Activated naive CD4-positive, alpha-beta T cell treated with anti-CD3 and anti-CD28 coated beads for 36 hours (primary cell): ENCODE measurements at regions of chr12 and their contacts with region 1.

Region 1: DNA sequence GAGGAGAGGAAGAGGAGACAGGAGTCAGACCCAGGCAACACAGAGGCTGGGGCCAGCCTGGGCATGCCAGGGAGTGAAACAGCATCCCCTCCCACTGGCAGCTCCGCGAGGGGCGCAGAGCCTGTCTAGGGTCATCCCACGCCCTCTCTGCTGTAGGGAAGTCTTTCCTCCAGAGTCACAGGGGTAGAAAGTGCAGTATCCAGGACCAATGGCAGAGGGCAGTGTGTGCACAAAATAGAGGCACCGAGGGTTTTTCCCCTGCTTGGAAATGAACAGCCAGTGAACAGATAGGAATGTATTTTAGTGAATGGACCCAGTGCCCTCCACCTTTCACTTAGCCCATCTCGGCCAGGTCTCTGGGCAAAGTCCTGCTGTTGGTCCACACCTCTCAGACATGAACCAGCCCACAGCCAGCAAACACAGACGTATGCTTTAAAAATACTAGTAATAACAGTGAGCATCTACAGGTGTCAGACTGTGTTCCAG is 9.4 kb upstream of the KRT74 start:
- DNase-seq: peak; percentile 84
- H3K4me3 Mint-ChIP-seq: no peak overlapping the region
- H3K27ac Mint-ChIP-seq: no peak overlapping the region
- H3K4me1 Mint-ChIP-seq: peaks cover 49% of the 10 kb centered on the region
- H3K27me3 Mint-ChIP-seq: no peaks in the 10 kb centered on the region

Region 2: DNA sequence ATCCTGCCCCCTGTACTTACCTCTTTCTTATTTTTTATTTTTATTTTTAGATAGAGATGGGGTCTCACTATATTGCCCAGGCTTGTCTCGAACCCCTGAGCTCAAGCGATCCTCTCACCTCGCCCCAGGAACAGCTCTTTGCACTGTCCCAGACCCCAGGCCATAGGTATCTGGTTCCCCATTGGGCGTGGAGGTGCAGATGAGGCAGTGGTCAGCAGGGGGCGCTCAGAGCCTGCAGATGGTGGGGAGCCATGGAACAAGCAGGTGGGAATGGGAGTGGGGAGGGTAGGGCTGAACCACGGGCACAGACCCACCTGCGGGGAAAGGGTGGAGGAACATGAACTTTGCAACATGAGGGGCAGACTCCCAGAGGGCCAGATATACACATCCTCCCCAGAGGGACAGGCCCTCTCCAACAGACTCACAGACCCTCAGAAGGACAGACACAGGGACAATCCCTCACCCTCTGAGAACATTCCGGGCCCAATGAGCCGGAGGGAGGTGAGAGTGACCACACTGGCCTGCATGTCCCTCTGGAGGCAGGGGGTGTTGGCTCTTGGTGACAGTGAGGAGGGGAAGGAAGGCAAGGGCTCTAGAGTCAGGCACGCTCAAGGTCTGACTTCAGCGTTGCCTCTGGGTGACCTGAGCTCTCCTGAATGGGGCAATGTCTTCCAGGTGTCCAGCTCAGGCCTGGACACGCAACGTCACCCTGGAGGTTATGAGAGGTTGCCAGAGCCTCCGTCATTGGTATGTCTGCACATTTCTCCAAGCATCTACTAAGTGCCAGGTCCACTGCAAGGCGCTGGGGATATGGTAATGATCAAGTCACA is 426.1 kb before region 1 on chr12:
- CTCF ChIA-PET with region 1: no interaction called
- intact Hi-C with region 1: loop called (anchors 2 kb)
- DNase-seq: peak; percentile 83
- H3K4me3 Mint-ChIP-seq: no peak overlapping the region
- H3K27ac Mint-ChIP-seq: no peak overlapping the region
- H3K4me1 Mint-ChIP-seq: peaks cover 26% of the 10 kb centered on the region
- H3K27me3 Mint-ChIP-seq: no peaks in the 10 kb centered on the region

Region 3: GRCh38 chr12:52372216-52373154 is 210.5 kb before region 1 on chr12:
- CTCF ChIA-PET with region 1: interaction called, 3 read pairs
- intact Hi-C with region 1: loop called (anchors 5 kb)
- DNase-seq: peak; percentile 77
- H3K4me3 Mint-ChIP-seq: no peak overlapping the region
- H3K27ac Mint-ChIP-seq: no peak overlapping the region
- H3K4me1 Mint-ChIP-seq: no peaks in the 10 kb centered on the region
- H3K27me3 Mint-ChIP-seq: no peaks in the 10 kb centered on the region

Region 4: GRCh38 chr12:52615208-52615868 is 32.3 kb after region 1 on chr12:
- CTCF ChIA-PET with region 1: interaction called, 8 read pairs
- intact Hi-C with region 1: loop called (anchors 1 kb)
- DNase-seq: peak; percentile 52
- H3K4me3 Mint-ChIP-seq: peak overlapping the region; percentile 4
- H3K27ac Mint-ChIP-seq: peak overlapping the region; percentile 85
- H3K4me1 Mint-ChIP-seq: peaks cover 79% of the 10 kb centered on the region
- H3K27me3 Mint-ChIP-seq: no peaks in the 10 kb centered on the region

Region 5: GRCh38 chr12:52633383-52633782 is 50.4 kb after region 1 on chr12:
- CTCF ChIA-PET with region 1: interaction called, 3 read pairs
- intact Hi-C with region 1: loop called (anchors 2 kb)
- DNase-seq: peak; percentile 67
- H3K4me3 Mint-ChIP-seq: peak overlapping the region; percentile 41
- H3K27ac Mint-ChIP-seq: peak overlapping the region; percentile 66
- H3K4me1 Mint-ChIP-seq: peaks cover 64% of the 10 kb centered on the region
- H3K27me3 Mint-ChIP-seq: no peaks in the 10 kb centered on the region

Region 6: GRCh38 chr12:52865090-52865944 is 282.3 kb after region 1 on chr12:
- CTCF ChIA-PET with region 1: interaction called, 126 read pairs
- intact Hi-C with region 1: loop called (anchors 1 kb)
- DNase-seq: peak; percentile 38
- H3K4me3 Mint-ChIP-seq: no peak overlapping the region
- H3K27ac Mint-ChIP-seq: peak overlapping the region; percentile 30
- H3K4me1 Mint-ChIP-seq: peaks cover 20% of the 10 kb centered on the region
- H3K27me3 Mint-ChIP-seq: no peaks in the 10 kb centered on the region

Region 7: DNA sequence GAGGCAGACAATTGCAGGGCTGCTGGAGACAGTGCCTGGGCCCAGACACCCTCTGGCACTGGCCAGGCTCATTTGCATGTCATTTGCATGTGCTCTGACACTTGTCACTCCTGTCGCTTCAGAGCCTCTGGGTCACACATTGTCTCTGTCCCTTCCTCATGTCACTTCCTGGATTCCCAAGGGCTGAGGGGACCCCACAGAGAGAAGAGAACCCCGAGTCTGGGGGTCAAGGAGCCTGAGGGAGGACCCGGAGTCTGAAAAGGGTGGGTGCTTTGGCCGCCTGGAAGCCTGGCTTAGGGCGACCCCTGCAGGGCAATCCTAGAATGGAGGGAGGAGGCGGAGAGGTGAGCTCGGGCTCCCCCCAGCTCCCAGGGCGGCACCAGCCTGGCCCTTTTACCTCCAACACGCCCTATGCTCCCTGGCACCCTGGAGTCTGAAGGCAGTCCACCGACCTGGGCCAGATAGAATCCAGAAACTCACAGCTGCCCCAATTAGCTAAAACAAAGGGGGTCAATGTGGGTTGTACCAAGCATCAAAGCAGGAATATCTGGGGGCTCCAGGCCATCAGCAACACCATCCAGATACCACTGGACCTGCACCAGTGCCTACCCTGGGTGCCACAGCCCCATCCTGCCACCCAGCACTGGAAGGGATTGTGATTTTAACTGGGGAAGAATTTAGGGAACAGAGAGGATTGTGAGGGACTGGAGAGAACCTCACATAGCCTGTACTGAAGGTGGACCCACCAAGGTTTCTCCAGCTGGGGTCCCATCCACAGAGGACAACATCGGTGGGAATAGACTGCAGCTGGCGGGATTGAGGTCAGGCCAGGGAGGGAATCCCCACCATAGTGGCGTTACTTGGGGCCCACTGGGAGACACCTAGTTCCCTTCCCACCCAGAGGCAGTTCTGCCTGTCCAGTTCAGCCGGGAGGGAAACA is 287.6 kb after region 1 on chr12:
- CTCF ChIA-PET with region 1: interaction called, 126 read pairs
- intact Hi-C with region 1: loop called (anchors 1 kb)
- DNase-seq: peak; percentile 88
- H3K4me3 Mint-ChIP-seq: no peak overlapping the region
- H3K27ac Mint-ChIP-seq: no peak overlapping the region
- H3K4me1 Mint-ChIP-seq: peaks cover 25% of the 10 kb centered on the region
- H3K27me3 Mint-ChIP-seq: no peaks in the 10 kb centered on the region